CD8-positive, alpha-beta T cell (primary cell): ENCODE measurements at regions of chr12 and their contacts with region 1.

Region 1: DNA sequence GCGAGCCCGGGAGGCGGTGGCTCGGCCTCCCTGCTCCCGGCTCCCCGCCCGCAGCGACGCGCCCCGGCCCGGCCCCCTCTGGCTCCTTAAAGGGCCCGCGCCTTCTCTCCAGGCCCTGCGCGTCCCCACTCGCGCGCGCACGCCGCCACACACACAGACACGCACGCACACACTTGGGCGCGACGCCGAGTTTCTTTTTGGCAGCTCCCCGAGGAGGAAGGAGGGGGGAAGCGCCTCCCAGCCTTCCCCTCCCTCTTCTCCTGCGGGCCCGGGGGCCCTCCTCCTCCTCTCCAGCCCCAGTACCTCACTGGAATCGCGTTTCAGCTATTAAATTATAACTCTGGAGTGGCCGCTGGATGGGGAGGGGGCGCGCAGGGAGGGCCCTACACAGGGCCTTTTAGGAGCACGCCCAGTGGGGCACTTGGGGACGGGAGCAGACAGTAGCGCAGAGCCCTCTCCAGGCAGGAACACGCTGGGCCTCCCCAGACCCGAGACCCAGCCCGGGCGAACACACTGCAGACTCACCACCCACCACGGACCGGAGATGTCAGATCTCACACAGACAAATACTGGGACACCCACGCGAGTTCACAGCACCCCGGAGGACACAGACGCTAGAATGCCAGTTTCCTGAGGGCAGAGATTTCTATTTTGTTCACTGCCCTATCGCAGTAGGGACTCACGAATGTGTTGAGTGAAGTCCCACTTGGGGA is 405 bp upstream of the NCOR2 start:
- DNase-seq: peak; percentile 59 to 91 (median 79)
- ATAC-seq: peak; percentile 65
- H3K4me3 ChIP-seq: peak overlapping the region; percentile 66 to 84
- H3K4me3 Mint-ChIP-seq: peak overlapping the region; percentile 85
- H3K27ac ChIP-seq: peak overlapping the region; percentile 1 to 23
- H3K27ac Mint-ChIP-seq: peak overlapping the region; percentile 67
- H3K4me1 ChIP-seq: peaks cover 32% of the 10 kb centered on the region
- H3K4me1 Mint-ChIP-seq: peaks cover 28% of the 10 kb centered on the region
- H3K27me3 ChIP-seq: no peaks in the 10 kb centered on the region
- H3K27me3 Mint-ChIP-seq: no peaks in the 10 kb centered on the region
- CTCF ChIP-seq: no peak

Region 2: DNA sequence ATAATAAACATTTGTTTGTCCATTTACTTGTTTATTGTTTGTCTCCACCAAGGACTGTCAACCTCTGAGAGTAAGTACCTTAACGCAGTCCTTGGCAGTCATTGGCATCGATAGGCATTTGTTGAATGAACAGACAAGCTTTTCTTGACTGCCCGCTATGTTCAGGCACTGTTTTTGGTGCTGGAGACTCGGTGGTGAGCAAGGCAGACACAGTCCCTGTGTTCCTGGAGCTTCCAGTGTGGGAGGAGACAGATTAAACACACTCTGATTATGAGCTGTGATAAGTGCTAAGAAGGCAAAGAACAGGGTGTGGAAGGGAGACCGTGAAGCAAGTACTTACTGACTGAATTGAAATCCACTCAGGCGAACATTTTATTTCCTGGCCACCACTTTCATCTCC is 854.4 kb before region 1 on chr12:
- CTCF ChIA-PET with region 1: no interaction called
- POLR2A ChIA-PET with region 1: no interaction called
- intact Hi-C with region 1: loop called in 1 of 2 experiments (anchors 5 kb)
- DNase-seq: peak in 1 of 9 experiments; percentile 21
- ATAC-seq: no peak
- H3K4me3 ChIP-seq: peak overlapping the region; percentile 69 to 98
- H3K4me3 Mint-ChIP-seq: peak overlapping the region; percentile 84
- H3K27ac ChIP-seq: no peak overlapping the region
- H3K27ac Mint-ChIP-seq: peak overlapping the region; percentile 86
- H3K4me1 ChIP-seq: peaks cover 22% of the 10 kb centered on the region
- H3K4me1 Mint-ChIP-seq: peaks cover 45% of the 10 kb centered on the region
- H3K27me3 ChIP-seq: no peaks in the 10 kb centered on the region
- H3K27me3 Mint-ChIP-seq: no peaks in the 10 kb centered on the region
- CTCF ChIP-seq: no peak

Region 3: GRCh38 chr12:124036674-124037109 is 531.1 kb before region 1 on chr12:
- CTCF ChIA-PET with region 1: no interaction called
- POLR2A ChIA-PET with region 1: no interaction called
- intact Hi-C with region 1: loop called in 1 of 2 experiments (anchors 10 kb)
- DNase-seq: peak in 7 of 9 experiments; percentile 20 to 69 (median 52)
- ATAC-seq: no peak
- H3K4me3 ChIP-seq: no peak overlapping the region
- H3K4me3 Mint-ChIP-seq: no peak overlapping the region
- H3K27ac ChIP-seq: no peak overlapping the region
- H3K27ac Mint-ChIP-seq: no peak overlapping the region
- H3K4me1 ChIP-seq: no peaks in the 10 kb centered on the region
- H3K4me1 Mint-ChIP-seq: no peaks in the 10 kb centered on the region
- H3K27me3 ChIP-seq: no peaks in the 10 kb centered on the region
- H3K27me3 Mint-ChIP-seq: no peaks in the 10 kb centered on the region
- CTCF ChIP-seq: peak; percentile 99

Region 4: GRCh38 chr12:124453419-124454351 is 114.1 kb before region 1 on chr12:
- CTCF ChIA-PET with region 1: interaction called, 3 read pairs
- POLR2A ChIA-PET with region 1: no interaction called
- intact Hi-C with region 1: loop called (anchors 1 kb)
- DNase-seq: peak; percentile 64 to 95 (median 84)
- ATAC-seq: peak; percentile 78
- H3K4me3 ChIP-seq: peak overlapping the region; percentile 29 to 57
- H3K4me3 Mint-ChIP-seq: peak overlapping the region; percentile 67
- H3K27ac ChIP-seq: peak overlapping the region; percentile 41 to 92
- H3K27ac Mint-ChIP-seq: peak overlapping the region; percentile 82
- H3K4me1 ChIP-seq: peaks cover 82% of the 10 kb centered on the region
- H3K4me1 Mint-ChIP-seq: peaks cover 67% of the 10 kb centered on the region
- H3K27me3 ChIP-seq: no peaks in the 10 kb centered on the region
- H3K27me3 Mint-ChIP-seq: no peaks in the 10 kb centered on the region
- CTCF ChIP-seq: no peak

Region 5: GRCh38 chr12:124609041-124609995 is 41.5 kb after region 1 on chr12:
- CTCF ChIA-PET with region 1: no interaction called
- POLR2A ChIA-PET with region 1: interaction called, 3 read pairs
- intact Hi-C with region 1: loop called (anchors 1 to 2 kb)
- DNase-seq: peak; percentile 77 to 95 (median 90)
- ATAC-seq: peak; percentile 93
- H3K4me3 ChIP-seq: peak overlapping the region in 1 of 2 experiments; percentile 21
- H3K4me3 Mint-ChIP-seq: peak overlapping the region; percentile 82
- H3K27ac ChIP-seq: no peak overlapping the region
- H3K27ac Mint-ChIP-seq: peak overlapping the region; percentile 76
- H3K4me1 ChIP-seq: peaks cover 30% of the 10 kb centered on the region
- H3K4me1 Mint-ChIP-seq: peaks cover 37% of the 10 kb centered on the region
- H3K27me3 ChIP-seq: no peaks in the 10 kb centered on the region
- H3K27me3 Mint-ChIP-seq: no peaks in the 10 kb centered on the region
- CTCF ChIP-seq: no peak

Region 6: DNA sequence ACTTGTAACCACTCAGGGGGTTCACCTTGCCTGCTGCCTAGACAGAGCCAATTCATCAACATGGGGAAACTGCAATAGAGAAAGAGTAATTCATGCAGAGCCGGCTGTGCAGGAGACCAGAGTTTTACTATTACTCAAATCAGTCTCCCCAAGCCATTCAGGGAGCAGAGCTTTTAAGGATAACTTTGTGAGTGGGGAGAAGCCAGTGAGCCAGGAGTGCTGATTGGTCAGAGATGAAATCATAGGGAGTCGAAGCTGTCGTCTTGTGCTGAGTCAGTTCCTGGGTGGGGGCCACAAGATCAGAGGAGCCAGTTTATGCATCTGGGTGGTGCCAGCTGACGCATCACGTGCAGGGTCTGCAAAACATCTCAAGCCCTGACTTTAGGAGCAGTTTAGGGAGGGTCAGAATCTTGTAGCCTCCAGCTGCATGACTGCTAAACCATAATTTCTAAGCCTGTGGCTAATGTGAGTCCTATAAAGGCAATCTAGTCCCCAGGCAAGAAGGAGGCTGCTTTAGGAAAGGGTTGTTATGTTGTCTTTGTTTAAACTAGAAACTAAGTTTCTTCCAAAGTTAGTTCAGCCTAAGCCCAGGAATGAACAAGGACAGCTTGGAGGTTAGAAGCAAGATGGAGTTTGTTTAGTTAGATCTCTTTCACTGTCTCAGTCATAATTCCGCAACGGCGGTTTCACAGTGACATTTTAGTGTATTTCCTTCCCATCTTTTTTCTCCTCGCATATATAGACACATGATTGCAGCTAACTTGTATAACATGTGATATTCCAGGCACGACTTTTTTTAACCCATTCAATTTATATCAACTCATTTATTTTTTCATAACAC is 68.5 kb after region 1 on chr12:
- CTCF ChIA-PET with region 1: interaction called, 3 read pairs
- POLR2A ChIA-PET with region 1: no interaction called
- intact Hi-C with region 1: loop called in 1 of 2 experiments (anchors 2 kb)
- DNase-seq: peak in 8 of 9 experiments; percentile 31 to 75 (median 48)
- ATAC-seq: peak; percentile 85
- H3K4me3 ChIP-seq: no peak overlapping the region
- H3K4me3 Mint-ChIP-seq: peak overlapping the region; percentile 1
- H3K27ac ChIP-seq: no peak overlapping the region
- H3K27ac Mint-ChIP-seq: no peak overlapping the region
- H3K4me1 ChIP-seq: peaks cover 9% of the 10 kb centered on the region
- H3K4me1 Mint-ChIP-seq: peaks cover 9% of the 10 kb centered on the region
- H3K27me3 ChIP-seq: no peaks in the 10 kb centered on the region
- H3K27me3 Mint-ChIP-seq: no peaks in the 10 kb centered on the region
- CTCF ChIP-seq: no peak

Region 7: DNA sequence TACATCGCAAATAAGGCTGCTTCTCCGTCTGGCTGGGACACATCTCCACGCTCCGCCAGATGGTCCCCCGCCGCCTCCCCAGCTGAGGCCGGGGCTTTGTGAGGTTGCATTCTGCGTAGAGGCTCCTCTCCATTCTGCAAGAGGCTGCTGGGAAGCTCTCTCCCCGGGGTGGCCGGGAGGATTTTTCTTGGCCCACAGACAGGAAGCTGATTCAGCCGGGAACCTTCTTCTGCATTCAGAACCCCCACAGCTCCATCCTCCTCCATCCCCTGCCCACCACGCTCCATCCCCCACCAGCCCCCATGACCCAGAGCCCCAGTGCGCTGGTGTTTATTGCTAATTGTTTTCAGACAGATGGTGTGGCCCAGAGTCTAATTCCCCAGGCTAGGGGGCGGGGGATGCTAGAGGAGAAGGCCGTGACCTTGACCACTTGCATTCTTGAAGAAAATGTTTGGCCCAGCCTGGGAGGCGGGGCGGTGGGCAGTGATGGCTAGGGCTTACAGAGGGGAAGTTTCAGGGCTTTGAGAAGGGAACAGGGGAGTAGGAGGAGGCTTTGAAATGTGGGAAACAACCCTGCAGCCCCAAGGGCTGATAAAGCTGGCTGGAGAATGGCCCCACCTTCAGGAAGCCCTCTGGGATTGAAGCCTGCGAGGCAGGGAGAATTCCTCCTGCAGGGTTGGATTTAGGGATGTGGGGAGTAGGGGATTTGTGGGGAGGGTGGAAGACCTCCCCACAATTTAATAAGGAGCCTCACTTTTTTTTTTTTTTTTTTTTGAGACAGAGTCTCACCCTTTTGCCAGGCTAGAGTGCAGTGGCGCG is 88.1 kb after region 1 on chr12:
- CTCF ChIA-PET with region 1: no interaction called
- POLR2A ChIA-PET with region 1: no interaction called
- intact Hi-C with region 1: no loop called
- DNase-seq: peak in 1 of 9 experiments; percentile 18
- ATAC-seq: no peak
- H3K4me3 ChIP-seq: no peak overlapping the region
- H3K4me3 Mint-ChIP-seq: no peak overlapping the region
- H3K27ac ChIP-seq: no peak overlapping the region
- H3K27ac Mint-ChIP-seq: no peak overlapping the region
- H3K4me1 ChIP-seq: no peaks in the 10 kb centered on the region
- H3K4me1 Mint-ChIP-seq: peaks cover 1% of the 10 kb centered on the region
- H3K27me3 ChIP-seq: no peaks in the 10 kb centered on the region
- H3K27me3 Mint-ChIP-seq: peaks cover 2% of the 10 kb centered on the region
- CTCF ChIP-seq: no peak

Region 8: DNA sequence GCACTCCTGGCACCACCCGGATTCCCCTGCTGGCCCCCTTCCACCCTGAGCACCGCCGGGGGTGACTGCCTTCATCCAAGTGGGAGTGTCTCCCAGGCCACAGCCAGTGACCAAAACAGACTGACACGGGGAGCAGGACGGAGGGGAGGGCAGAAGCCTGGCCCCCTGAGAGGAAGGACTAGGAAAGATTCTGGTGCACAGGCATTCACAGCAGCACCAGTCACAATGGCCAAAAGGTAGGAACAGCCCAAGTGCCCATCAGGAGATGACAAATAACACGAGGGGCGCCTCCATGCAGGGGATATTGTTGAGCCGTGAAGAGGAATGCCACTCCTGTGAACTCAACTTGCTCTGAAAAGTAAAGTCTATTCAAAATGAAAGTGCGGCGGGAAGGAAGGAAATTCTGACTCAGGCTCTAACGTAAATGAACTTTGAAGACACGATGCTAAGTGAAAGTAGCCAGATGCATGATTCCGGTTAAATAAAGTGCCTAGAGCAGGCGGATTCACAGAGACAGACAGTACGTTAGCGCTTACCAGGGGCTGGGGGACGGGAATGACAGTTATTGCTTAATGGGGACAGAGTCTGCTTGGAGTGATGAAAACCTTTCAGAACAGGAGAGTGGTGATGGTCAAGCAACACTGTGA is 145.7 kb after region 1 on chr12:
- CTCF ChIA-PET with region 1: no interaction called
- POLR2A ChIA-PET with region 1: no interaction called
- intact Hi-C with region 1: no loop called
- DNase-seq: peak in 8 of 9 experiments; percentile 32 to 85 (median 54)
- ATAC-seq: peak; percentile 90
- H3K4me3 ChIP-seq: peak overlapping the region; percentile 40 to 42
- H3K4me3 Mint-ChIP-seq: peak overlapping the region; percentile 76
- H3K27ac ChIP-seq: peak overlapping the region in 1 of 2 experiments; percentile 43
- H3K27ac Mint-ChIP-seq: peak overlapping the region; percentile 81
- H3K4me1 ChIP-seq: peaks cover 16% of the 10 kb centered on the region
- H3K4me1 Mint-ChIP-seq: peaks cover 17% of the 10 kb centered on the region
- H3K27me3 ChIP-seq: no peaks in the 10 kb centered on the region
- H3K27me3 Mint-ChIP-seq: no peaks in the 10 kb centered on the region
- CTCF ChIP-seq: no peak

Region 9: GRCh38 chr12:125065021-125065795 is 497.4 kb after region 1 on chr12 and contains the start of gene AACS:
- CTCF ChIA-PET with region 1: no interaction called
- POLR2A ChIA-PET with region 1: no interaction called
- intact Hi-C with region 1: loop called in 1 of 2 experiments (anchors 10 kb)
- DNase-seq: peak; percentile 59 to 85 (median 74)
- ATAC-seq: peak; percentile 96
- H3K4me3 ChIP-seq: peak within 1 kb of the TSS; percentile 67 to 98
- H3K4me3 Mint-ChIP-seq: peak within 1 kb of the TSS; percentile 86
- H3K27ac ChIP-seq: peak within 1 kb of the TSS; percentile 25 to 33
- H3K27ac Mint-ChIP-seq: peak within 1 kb of the TSS; percentile 69
- H3K4me1 ChIP-seq: peaks cover 10% of the 10 kb centered on the region
- H3K4me1 Mint-ChIP-seq: peaks cover 21% of the 10 kb centered on the region
- H3K27me3 ChIP-seq: no peaks in the 10 kb centered on the region
- H3K27me3 Mint-ChIP-seq: peaks cover 1% of the 10 kb centered on the region
- CTCF ChIP-seq: no peak
- total RNA-seq, gene AACS: 11.0 to 12.3 TPM